CD4-positive, alpha-beta memory T cell (primary cell): ENCODE measurements at regions of chr3 and their contacts with region 1.

Region 1: GRCh38 chr3:66483406-66483906 is 17.4 kb downstream of the LRIG1 start:
- DNase-seq: peak in 2 of 5 donors; percentile 34 to 63
- H3K4me3 ChIP-seq: no peak overlapping the region
- H3K4me3 Mint-ChIP-seq: peak overlapping the region; percentile 59 to 89 (median 74)
- H3K27ac ChIP-seq: no peak overlapping the region
- H3K27ac Mint-ChIP-seq: peak overlapping the region; percentile 68 to 83 (median 81)
- H3K4me1 ChIP-seq: peaks cover 97% of the 10 kb centered on the region
- H3K4me1 Mint-ChIP-seq: peaks cover 53 to 79% (median 64%) of the 10 kb centered on the region in 4 donors
- H3K27me3 ChIP-seq: no peaks in the 10 kb centered on the region
- H3K27me3 Mint-ChIP-seq: no peaks in the 10 kb centered on the region

Region 2: GRCh38 chr3:66317750-66318376 is 165.6 kb before region 1 on chr3:
- CTCF ChIA-PET with region 1: no interaction called
- POLR2A ChIA-PET with region 1: no interaction called
- intact Hi-C with region 1: no loop called
- DNase-seq: no peak
- H3K4me3 ChIP-seq: no peak overlapping the region
- H3K4me3 Mint-ChIP-seq: no peak overlapping the region
- H3K27ac ChIP-seq: no peak overlapping the region
- H3K27ac Mint-ChIP-seq: no peak overlapping the region
- H3K4me1 ChIP-seq: peaks cover 10% of the 10 kb centered on the region
- H3K4me1 Mint-ChIP-seq: peaks cover 20 to 39% (median 25%) of the 10 kb centered on the region in 4 donors
- H3K27me3 ChIP-seq: no peaks in the 10 kb centered on the region
- H3K27me3 Mint-ChIP-seq: no peaks in the 10 kb centered on the region

Region 3: GRCh38 chr3:66495646-66496045 is 12.2 kb after region 1 on chr3:
- CTCF ChIA-PET with region 1: interaction called, 15 read pairs
- POLR2A ChIA-PET with region 1: interaction called, 61 read pairs
- intact Hi-C with region 1: loop called (anchors 1 kb)
- DNase-seq: no peak
- H3K4me3 ChIP-seq: no peak overlapping the region
- H3K4me3 Mint-ChIP-seq: peak overlapping the region in 7 of 8 donors; percentile 51 to 99 (median 75)
- H3K27ac ChIP-seq: no peak overlapping the region
- H3K27ac Mint-ChIP-seq: peak overlapping the region; percentile 34 to 87 (median 67)
- H3K4me1 ChIP-seq: peaks cover 87% of the 10 kb centered on the region
- H3K4me1 Mint-ChIP-seq: peaks cover 72 to 94% (median 81%) of the 10 kb centered on the region in 4 donors
- H3K27me3 ChIP-seq: no peaks in the 10 kb centered on the region
- H3K27me3 Mint-ChIP-seq: no peaks in the 10 kb centered on the region